ENCODE measurements at regions of chr21 and their contacts with region 1.

Region 1: GRCh38 chr21:39183237-39184007 is at the start of gene PSMG1:
- DNase-seq: peak; percentile 91
- H3K4me3 Mint-ChIP-seq: peak within 1 kb of the TSS; percentile 98
- H3K27ac Mint-ChIP-seq: peak within 1 kb of the TSS; percentile 98
- H3K4me1 Mint-ChIP-seq: peaks cover 55% of the 10 kb centered on the region
- H3K27me3 Mint-ChIP-seq: no peaks in the 10 kb centered on the region
- total RNA-seq, gene PSMG1: 102 and 103 TPM in 2 replicates

Region 2: DNA sequence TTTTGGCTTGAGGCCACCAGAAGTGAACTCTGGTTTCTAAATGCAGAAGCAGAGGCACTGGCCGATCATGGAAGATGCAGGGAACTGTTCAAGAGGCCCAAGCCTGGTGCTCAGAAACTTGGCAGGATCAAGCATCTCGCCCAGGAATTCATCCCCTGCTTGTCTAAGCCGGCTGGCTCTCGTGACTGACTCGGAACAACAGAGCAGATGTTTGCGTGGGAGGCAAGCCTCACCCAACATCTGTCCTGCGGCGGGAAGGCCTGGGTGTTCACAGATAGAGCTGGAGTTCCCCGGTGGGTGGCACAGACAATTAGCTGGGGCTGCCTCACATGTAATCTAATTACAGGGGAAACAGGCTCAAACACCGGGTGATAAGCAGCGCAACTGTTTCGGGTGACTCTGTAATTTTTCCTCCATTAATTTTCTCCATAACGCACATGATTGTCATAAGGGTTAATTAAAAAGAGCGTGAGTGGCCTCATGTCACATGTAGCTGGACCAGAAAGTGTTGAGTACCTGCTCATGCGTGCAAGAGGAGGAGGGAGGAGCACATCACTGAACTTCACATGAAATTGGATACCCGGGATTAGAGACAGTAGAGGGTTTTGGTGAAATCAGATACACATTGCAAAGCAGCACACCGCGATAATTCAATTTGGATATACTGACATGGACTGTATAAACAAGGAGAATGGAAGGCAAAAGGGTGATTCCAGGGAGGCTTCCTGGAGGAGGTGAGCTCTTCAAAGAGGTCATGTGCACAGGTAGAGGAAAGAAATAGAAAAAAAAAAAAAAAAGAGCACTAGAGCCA is 197.6 kb before region 1 on chr21:
- intact Hi-C with region 1: loop called (anchors 10 kb)
- DNase-seq: peak; percentile 50
- H3K4me3 Mint-ChIP-seq: peak overlapping the region; percentile 80
- H3K27ac Mint-ChIP-seq: peak overlapping the region; percentile 93
- H3K4me1 Mint-ChIP-seq: peaks cover 36% of the 10 kb centered on the region
- H3K27me3 Mint-ChIP-seq: peaks cover 9% of the 10 kb centered on the region

Region 3: DNA sequence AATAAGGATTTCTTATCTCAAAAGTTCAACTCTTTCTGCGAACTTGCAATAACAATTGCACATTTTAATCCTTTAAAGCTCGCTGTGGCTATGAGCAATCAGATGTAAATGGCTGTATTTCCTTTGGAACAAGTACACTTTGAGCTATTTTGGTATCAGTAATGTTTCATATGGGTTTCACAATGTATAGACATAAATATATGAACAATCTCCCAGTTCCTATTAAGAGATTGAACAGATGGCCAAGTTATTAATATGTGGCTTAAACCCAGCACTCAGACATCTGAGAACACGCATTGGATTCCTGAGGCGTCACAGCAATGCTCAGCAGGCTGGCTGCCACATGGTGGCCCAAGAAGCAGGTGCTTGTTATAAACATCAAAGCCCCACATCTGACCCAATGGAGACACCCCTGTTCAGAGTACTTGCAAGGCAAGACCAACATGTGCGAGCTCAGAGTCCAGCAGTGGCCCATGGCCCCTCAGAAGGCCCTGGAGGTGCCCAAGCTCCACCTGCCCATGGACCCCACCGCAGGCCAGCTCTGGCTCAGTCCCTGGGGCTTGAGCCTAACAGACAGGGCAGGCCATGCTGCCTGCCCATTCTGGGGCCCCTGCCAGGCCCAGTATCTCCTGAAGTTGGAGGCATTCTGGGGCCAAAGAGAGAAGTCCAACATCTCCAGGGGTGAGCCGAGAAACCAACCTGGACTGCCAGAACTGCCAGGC is 23.9 kb before region 1 on chr21:
- intact Hi-C with region 1: no loop called
- DNase-seq: no peak
- H3K4me3 Mint-ChIP-seq: no peak overlapping the region
- H3K27ac Mint-ChIP-seq: no peak overlapping the region
- H3K4me1 Mint-ChIP-seq: no peaks in the 10 kb centered on the region
- H3K27me3 Mint-ChIP-seq: peaks cover 2% of the 10 kb centered on the region

Region 4: GRCh38 chr21:39349211-39350093 is 166.0 kb after region 1 on chr21:
- intact Hi-C with region 1: loop called (anchors 1 kb)
- DNase-seq: peak; percentile 96
- H3K4me3 Mint-ChIP-seq: peak overlapping the region; percentile 99
- H3K27ac Mint-ChIP-seq: peak overlapping the region; percentile 100
- H3K4me1 Mint-ChIP-seq: peaks cover 45% of the 10 kb centered on the region
- H3K27me3 Mint-ChIP-seq: peaks cover 19% of the 10 kb centered on the region

Region 5: DNA sequence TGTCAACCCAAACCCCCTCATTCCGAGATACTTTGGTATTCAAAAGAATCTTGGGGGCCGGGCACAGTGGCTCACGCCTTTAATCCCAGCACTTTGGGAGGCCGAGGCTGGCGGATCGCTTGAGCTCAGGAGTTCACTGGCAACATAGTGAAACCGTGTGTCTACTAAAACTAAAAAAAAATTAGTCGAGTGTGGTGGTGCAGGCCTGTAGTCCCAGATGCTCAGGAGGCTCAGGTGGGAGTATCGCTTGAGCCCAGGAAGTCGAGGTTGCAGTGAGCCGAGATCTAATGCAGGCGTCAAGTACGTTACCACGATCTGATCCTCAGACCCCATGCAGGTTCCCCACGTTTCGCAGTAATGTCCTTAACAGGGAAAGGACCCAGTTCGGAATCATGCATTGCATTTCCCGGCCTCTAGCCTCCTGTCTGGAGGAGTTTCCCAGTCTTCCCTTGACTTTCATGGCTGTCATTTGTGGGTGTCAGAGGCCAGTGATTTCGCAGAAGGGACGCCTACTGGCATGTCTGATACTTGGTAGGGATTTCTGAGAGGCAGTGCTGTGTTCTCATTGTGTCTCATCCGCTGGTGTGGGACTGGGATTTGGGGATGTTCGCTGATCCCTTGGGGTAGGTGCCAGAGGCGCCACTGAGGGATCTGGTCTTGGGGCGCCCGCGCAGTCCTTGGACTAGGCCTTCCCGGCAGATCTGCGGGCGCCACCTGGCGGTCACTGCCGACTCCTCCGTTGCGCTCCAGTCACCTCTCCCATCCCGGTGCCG is 204.8 kb after region 1 on chr21:
- intact Hi-C with region 1: loop called (anchors 1 kb)
- DNase-seq: peak; percentile 80
- H3K4me3 Mint-ChIP-seq: peak overlapping the region; percentile 86
- H3K27ac Mint-ChIP-seq: peak overlapping the region; percentile 87
- H3K4me1 Mint-ChIP-seq: peaks cover 19% of the 10 kb centered on the region
- H3K27me3 Mint-ChIP-seq: no peaks in the 10 kb centered on the region

Measured in activated T-helper 1 cell treated with anti-CD3 and anti-CD28 coated beads, Interleukin-12 subunit alpha, Interleukin-12 subunit beta, Interleukin-2, Interleukin-4 antibody, amounts not matched to agents 30 ng/mL and 10 ng/mL and 1 ng/mL, durations not matched to agents 14 hours and 24 hours and 36 hours (primary cell).